ENCODE measurements at regions of chr2 and their contacts with region 1.

Region 1: DNA sequence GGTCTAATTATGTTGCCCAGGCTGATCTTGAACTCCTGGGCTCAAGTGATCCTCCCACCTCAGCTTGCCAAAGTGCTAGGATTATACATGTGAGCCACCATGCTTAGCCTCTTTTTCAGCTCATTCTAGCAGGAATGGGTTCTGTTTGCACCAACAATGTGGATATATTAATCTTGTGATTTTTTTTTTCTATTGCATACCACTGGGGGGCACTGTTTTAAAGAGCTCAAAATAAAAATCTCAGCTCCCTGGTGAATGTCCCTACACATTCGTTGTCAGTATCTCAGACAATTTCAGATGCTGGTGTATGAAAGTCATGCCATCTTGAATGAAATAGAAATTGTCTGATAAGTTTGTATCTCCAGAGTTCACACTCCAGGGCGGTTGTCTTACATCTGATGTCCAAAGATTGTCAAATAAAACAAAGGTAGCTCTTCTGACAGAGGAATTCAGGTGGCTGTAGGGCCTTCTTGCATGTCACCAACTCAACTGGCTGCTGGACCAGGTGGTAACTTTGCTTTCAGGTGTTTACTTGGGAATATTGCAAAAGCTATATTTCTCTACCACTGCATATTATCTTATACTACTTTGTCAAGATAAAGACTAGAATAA is 3.1 kb upstream of the MATN3 start:
- DNase-seq: no peak
- ATAC-seq: no peak
- H3K4me3 Mint-ChIP-seq: no peak overlapping the region
- H3K27ac Mint-ChIP-seq: no peak overlapping the region
- H3K4me1 Mint-ChIP-seq: peaks cover 12% of the 10 kb centered on the region
- H3K27me3 Mint-ChIP-seq: peaks cover 34% of the 10 kb centered on the region

Region 2: GRCh38 chr2:19989681-19990415 is 25.7 kb before region 1 on chr2 and contains the start of gene WDR35:
- CTCF ChIA-PET with region 1: interaction called, 13 read pairs
- POLR2A ChIA-PET with region 1: no interaction called
- DNase-seq: peak; percentile 92
- ATAC-seq: peak; percentile 98
- H3K4me3 Mint-ChIP-seq: peak within 1 kb of the TSS; percentile 85
- H3K27ac Mint-ChIP-seq: peak within 1 kb of the TSS; percentile 85
- H3K4me1 Mint-ChIP-seq: peaks cover 22% of the 10 kb centered on the region
- H3K27me3 Mint-ChIP-seq: peaks cover 21% of the 10 kb centered on the region
- total RNA-seq, gene WDR35: 2.9 to 3.9 TPM

Region 3: GRCh38 chr2:20035955-20036666 is 20.5 kb after region 1 on chr2:
- CTCF ChIA-PET with region 1: interaction called, 25 read pairs
- POLR2A ChIA-PET with region 1: no interaction called
- DNase-seq: no peak
- ATAC-seq: no peak
- H3K4me3 Mint-ChIP-seq: no peak overlapping the region
- H3K27ac Mint-ChIP-seq: peak overlapping the region; percentile 57
- H3K4me1 Mint-ChIP-seq: peaks cover 9% of the 10 kb centered on the region
- H3K27me3 Mint-ChIP-seq: no peaks in the 10 kb centered on the region

Region 4: DNA sequence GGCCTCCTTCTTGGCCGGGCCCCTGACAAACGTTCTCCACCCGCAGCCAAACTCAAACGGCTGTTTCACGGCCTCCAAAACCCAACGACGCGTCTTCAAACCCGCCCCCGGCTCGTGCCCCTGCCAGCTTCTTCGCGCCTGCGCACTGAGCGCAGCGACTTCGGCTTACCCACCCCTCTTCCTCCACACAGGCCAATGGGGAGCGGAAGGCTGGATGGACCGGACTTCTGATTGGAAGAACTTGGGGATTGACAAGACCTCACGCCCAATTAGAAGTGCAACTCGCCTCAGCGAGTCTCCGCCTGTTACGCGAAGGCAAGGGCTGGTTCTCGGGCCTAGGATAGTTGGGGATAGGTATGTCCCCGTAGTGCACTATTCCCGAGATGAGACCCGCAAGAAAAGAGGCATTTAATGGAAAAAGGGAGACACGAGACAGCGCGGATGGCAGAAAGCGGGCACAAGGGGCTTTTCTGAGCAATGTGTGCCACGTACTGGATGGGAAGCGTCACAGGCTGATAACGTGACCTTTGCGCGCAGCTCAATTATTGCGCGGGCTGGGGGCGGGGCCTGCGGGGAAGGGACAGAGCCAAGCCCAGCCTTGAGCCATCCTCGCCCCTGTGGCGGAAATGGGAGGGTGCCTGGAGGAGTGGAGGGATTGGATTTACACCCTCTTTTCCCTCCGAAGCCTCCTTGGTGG is 36.1 kb after region 1 on chr2 and contains the start of gene LAPTM4A:
- CTCF ChIA-PET with region 1: interaction called, 21 read pairs
- POLR2A ChIA-PET with region 1: interaction called, 4 read pairs
- DNase-seq: peak; percentile 99
- ATAC-seq: peak; percentile 99
- H3K4me3 Mint-ChIP-seq: no peak within 1 kb of the TSS
- H3K27ac Mint-ChIP-seq: no peak within 1 kb of the TSS
- H3K4me1 Mint-ChIP-seq: peaks cover 24% of the 10 kb centered on the region
- H3K27me3 Mint-ChIP-seq: peaks cover 14% of the 10 kb centered on the region
- total RNA-seq, gene LAPTM4A: 19.8 to 21.1 TPM

Measured in activated CD8-positive, alpha-beta T cell treated with anti-CD3 and anti-CD28 coated beads, Interleukin-2, amount 10 ng/mL, durations not matched to agents 7 days and 5 days (primary cell).